SK-N-SH (cell line): ENCODE measurements at regions of chr10 and their contacts with region 1.

Region 1: GRCh38 chr10:93482145-93482834 is at the start of gene MYOF:
- DNase-seq: peak; percentile 65
- H3K4me3 ChIP-seq: peak within 1 kb of the TSS; percentile 59 to 62
- H3K27ac ChIP-seq: peak within 1 kb of the TSS; percentile 78 to 98
- H3K4me1 ChIP-seq: no peaks in the 10 kb centered on the region; a peak in 1 of 4 replicates
- H3K27me3 ChIP-seq: no peaks in the 10 kb centered on the region
- CTCF ChIP-seq: peak; percentile 65
- EP300 ChIP-seq: no peak
- RAD21 ChIP-seq: peak; percentile 91
- polyA plus RNA-seq, gene MYOF: 103 and 134 TPM in 2 replicates

Region 2: DNA sequence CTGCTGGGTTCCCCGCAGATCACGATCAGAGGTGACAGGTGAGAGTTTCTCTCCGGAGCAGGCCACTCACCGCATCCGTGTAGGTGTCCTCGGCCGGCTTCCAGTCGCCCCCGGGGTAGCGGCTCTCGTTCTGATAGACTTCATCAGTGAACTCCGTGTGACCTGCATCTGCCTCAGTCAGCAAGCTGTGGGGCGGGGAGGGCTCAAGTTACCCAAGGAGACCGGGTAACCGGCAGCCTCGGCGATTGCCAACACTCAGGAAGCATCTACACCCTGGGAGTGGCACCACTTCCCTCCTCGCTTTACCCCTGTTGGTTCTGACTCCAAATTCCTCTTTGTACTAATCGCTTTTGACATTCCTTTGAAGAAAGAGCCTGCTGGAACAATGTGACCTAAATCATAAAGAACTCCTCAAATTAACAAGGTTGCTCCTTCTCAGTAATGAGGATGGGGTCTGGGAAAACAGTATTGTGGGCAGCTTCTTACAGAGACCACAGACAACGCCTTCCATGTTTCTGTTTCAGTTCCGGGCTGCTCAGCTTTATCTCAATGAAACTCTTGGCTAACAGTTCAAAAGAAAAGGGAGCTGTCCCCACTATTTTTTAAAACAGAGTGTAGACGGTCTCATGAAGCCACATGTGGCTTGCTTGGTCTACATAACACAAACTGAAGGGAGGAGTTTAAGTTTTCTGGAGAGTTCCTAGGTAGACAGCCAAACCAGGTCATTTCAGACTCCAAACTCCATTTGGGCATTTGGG is 118.2 kb before region 1 on chr10:
- CTCF ChIA-PET with region 1: interaction called, 23 read pairs
- POLR2A ChIA-PET with region 1: no interaction called
- DNase-seq: no peak
- H3K4me3 ChIP-seq: no peak overlapping the region
- H3K27ac ChIP-seq: no peak overlapping the region
- H3K4me1 ChIP-seq: no peaks in the 10 kb centered on the region
- H3K27me3 ChIP-seq: no peaks in the 10 kb centered on the region
- CTCF ChIP-seq: no peak
- EP300 ChIP-seq: no peak
- RAD21 ChIP-seq: no peak

Region 3: GRCh38 chr10:93420091-93420490 is 62.2 kb before region 1 on chr10:
- CTCF ChIA-PET with region 1: interaction called, 17 read pairs
- POLR2A ChIA-PET with region 1: no interaction called
- DNase-seq: peak; percentile 56
- H3K4me3 ChIP-seq: no peak overlapping the region
- H3K27ac ChIP-seq: peak overlapping the region; percentile 4 to 37; a peak in 1 of 4 replicates
- H3K4me1 ChIP-seq: peaks cover 0 to 5% of the 10 kb centered on the region in 2 experiments; a peak in 2 of 4 replicates
- H3K27me3 ChIP-seq: no peaks in the 10 kb centered on the region
- CTCF ChIP-seq: no peak
- EP300 ChIP-seq: no peak
- RAD21 ChIP-seq: no peak

Region 4: GRCh38 chr10:93458821-93459257 is 23.5 kb before region 1 on chr10:
- CTCF ChIA-PET with region 1: interaction called, 15 read pairs
- POLR2A ChIA-PET with region 1: no interaction called
- DNase-seq: no peak
- H3K4me3 ChIP-seq: no peak overlapping the region
- H3K27ac ChIP-seq: peak overlapping the region; percentile 86 to 99
- H3K4me1 ChIP-seq: peaks cover 7 to 56% of the 10 kb centered on the region in 2 experiments; a peak in 3 of 4 replicates
- H3K27me3 ChIP-seq: no peaks in the 10 kb centered on the region
- CTCF ChIP-seq: no peak
- EP300 ChIP-seq: peak; percentile 36 to 94; a peak in 3 of 4 replicates
- RAD21 ChIP-seq: no peak

Region 5: DNA sequence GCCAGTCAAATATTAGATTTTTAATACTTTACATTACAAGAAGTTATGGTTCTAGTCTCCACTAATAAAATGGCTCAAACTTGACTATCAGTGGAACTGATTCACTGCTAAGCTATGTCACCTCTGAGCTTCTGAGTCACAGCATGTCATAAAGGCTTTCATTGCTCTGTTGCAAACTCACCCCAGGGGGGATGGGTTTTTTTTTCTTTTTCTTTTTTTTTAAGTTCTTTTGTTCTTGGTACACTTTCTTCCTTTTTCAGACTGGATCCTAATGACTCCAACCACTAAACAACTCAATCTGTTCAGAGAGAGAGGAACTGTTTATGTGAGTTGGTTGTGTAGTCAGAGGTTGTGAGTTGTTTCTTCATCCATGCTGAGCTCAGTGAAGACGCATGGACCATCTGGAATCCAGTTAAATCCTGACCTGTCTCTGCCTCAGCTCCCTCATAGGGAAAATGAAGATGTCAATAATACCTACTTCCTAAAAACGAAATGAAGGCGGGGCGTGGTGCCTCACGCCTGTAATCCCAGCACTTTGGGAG is 11.1 kb before region 1 on chr10:
- CTCF ChIA-PET with region 1: interaction called, 29 read pairs
- POLR2A ChIA-PET with region 1: no interaction called
- DNase-seq: no peak
- H3K4me3 ChIP-seq: no peak overlapping the region
- H3K27ac ChIP-seq: peak overlapping the region; percentile 54 to 99; a peak in 3 of 4 replicates
- H3K4me1 ChIP-seq: peaks cover 14 to 62% of the 10 kb centered on the region in 2 experiments; a peak in 3 of 4 replicates
- H3K27me3 ChIP-seq: no peaks in the 10 kb centered on the region
- CTCF ChIP-seq: no peak
- EP300 ChIP-seq: peak in 1 of 2 experiments; percentile 95; a peak in 2 of 4 replicates
- RAD21 ChIP-seq: no peak

Region 6: DNA sequence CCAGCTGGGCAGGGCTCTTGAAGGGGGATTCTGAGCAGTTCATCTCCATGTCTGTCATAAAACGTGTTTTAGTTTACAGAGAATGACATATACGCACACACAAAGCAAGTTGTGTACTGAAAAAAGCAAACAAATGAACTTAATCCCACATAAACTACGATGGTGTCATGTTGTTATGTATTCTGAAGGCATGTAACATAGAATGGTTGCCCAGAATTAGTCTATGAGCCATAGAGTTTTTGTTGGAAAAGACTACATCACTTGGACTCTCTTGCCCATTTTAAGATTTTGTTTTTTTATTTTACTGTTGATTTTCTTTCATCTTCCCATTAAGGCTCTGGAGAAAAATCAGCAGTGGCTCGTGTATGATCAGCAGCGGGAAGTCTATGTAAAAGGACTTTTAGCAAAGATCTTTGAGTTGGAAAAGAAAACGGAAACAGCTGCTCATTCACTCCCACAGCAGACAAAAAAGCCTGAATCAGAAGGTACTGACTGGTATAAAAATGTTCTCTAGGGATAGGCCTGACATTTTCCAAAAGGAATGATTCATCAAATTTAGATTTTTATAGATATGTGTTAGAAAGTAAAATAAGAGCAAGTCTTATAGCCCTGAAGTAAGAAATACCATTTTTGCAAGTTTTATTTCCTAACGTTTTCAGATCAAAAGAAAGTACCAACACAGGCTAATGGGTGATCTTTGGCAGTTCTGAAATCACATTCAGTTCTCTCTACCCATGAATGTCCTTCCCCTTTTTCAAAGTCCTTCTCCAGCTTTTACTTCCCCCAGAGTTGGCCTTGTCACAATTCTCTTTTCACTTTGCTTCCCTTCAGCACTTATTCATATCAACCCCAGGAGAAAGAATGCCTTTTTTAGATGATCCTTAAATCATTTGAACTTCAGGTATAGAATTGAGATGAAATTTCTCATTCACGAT is 33.0 kb after region 1 on chr10:
- CTCF ChIA-PET with region 1: interaction called, 72 read pairs
- POLR2A ChIA-PET with region 1: no interaction called
- DNase-seq: no peak
- H3K4me3 ChIP-seq: no peak overlapping the region
- H3K27ac ChIP-seq: peak overlapping the region in 1 of 2 experiments; percentile 66; a peak in 2 of 4 replicates
- H3K4me1 ChIP-seq: peaks cover 0 to 21% of the 10 kb centered on the region in 2 experiments; a peak in 2 of 4 replicates
- H3K27me3 ChIP-seq: no peaks in the 10 kb centered on the region
- CTCF ChIP-seq: no peak
- EP300 ChIP-seq: no peak
- RAD21 ChIP-seq: no peak

Region 7: GRCh38 chr10:93541402-93542357 is 59.4 kb after region 1 on chr10:
- CTCF ChIA-PET with region 1: no interaction called
- POLR2A ChIA-PET with region 1: no interaction called
- DNase-seq: peak; percentile 67
- H3K4me3 ChIP-seq: peak overlapping the region; percentile 25 to 39
- H3K27ac ChIP-seq: no peak overlapping the region
- H3K4me1 ChIP-seq: peaks cover 0 to 8% of the 10 kb centered on the region in 2 experiments; a peak in 1 of 4 replicates
- H3K27me3 ChIP-seq: no peaks in the 10 kb centered on the region
- CTCF ChIP-seq: peak; percentile 94
- EP300 ChIP-seq: no peak
- RAD21 ChIP-seq: peak; percentile 67

Region 8: DNA sequence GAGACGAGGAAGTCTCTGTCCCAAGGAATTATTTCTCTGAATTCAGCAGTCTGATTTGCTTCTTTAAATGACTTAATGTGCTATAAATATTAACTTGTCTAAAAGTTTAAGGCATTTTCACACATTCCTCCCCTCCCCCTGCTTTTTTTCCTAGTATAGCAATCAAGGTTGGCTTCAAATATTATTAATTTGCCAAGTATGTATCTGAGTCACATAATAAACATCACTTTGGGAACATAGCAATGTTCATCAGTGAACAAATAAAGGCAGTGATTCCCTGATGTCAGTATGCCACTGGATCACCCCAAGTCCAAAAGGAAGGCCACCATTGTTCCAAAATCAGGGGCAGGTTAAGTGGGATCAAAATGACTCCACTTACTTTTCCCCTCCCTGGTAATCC is 170.6 kb after region 1 on chr10:
- CTCF ChIA-PET with region 1: no interaction called
- POLR2A ChIA-PET with region 1: no interaction called
- DNase-seq: no peak
- H3K4me3 ChIP-seq: no peak overlapping the region
- H3K27ac ChIP-seq: no peak overlapping the region
- H3K4me1 ChIP-seq: no peaks in the 10 kb centered on the region
- H3K27me3 ChIP-seq: no peaks in the 10 kb centered on the region
- CTCF ChIP-seq: no peak
- EP300 ChIP-seq: no peak
- RAD21 ChIP-seq: no peak